ENCODE measurements at regions of chr15 and their contacts with region 1.

Region 1: DNA sequence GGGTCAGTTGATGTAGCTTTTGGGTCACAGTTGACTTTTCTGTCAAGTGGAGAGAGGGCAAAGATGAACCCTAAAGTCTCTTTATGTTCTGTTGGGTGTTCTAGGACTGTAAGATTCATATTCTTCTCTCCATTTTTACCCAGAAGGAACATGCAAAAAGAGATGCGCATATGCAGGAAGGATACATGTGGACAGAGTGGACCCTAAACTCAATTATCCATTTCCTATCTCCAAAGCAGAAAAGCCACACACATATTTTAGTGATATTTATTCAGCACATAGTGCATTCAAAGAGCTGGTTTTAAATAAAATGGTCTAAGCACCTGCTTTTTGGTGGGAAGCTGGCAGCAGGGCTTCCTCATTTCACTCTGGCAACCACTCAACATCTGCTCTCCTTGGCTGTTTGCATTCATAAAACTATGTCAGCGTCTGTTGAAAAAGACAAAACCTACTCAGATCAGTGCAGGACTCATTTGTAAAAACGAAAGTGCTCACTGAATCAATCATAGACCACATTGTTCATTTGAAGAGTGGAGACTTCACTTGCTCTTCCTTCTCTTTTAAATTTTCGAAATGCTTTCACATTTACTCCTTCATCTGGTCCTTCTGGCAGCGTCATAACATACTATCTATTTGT is 96.6 kb downstream of the SEMA6D start:
- DNase-seq: no peak
- H3K4me3 Mint-ChIP-seq: no peak overlapping the region
- H3K27ac Mint-ChIP-seq: peak overlapping the region; percentile 11
- H3K4me1 Mint-ChIP-seq: peaks cover 13% of the 10 kb centered on the region
- H3K27me3 Mint-ChIP-seq: peaks cover 7% of the 10 kb centered on the region

Region 2: DNA sequence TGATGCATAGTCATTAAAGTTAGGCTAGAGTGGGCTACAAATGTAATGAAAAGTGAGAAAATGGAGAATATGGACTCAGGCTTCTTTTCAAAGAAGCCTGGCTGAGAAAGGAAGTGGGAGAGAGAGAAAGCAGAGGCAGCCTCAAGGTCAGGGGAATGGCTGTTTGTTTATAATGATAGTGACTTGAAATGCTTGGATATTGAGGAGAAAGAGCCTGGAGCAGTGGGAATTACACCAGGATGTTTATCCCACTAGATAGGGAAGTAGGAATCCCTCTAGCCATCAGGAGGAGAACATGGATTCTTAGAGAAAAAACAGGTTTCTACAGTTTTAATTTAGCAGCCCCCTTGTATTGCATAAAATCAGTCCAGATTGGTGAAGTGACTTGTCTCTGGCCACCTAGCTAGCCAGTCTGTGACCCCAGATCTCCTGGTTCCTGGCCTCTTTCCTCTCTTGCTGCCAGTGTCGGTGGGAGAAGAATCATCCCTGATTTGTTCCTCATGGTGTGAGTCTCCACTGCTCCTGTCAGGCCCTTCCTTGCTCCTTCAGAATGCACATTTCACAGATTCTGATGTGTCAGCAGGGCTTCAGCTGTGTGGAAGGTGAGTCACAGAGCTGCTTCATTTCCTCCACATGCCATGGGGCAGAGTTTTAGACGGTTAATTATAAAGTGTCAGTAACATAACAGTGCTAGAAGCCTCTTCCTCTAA is 63.7 kb before region 1 on chr15:
- intact Hi-C with region 1: no loop called
- DNase-seq: no peak
- H3K4me3 Mint-ChIP-seq: no peak overlapping the region
- H3K27ac Mint-ChIP-seq: no peak overlapping the region
- H3K4me1 Mint-ChIP-seq: no peaks in the 10 kb centered on the region
- H3K27me3 Mint-ChIP-seq: no peaks in the 10 kb centered on the region

Region 3: GRCh38 chr15:47870956-47871625 is 57.2 kb after region 1 on chr15:
- intact Hi-C with region 1: no loop called
- DNase-seq: no peak
- H3K4me3 Mint-ChIP-seq: no peak overlapping the region
- H3K27ac Mint-ChIP-seq: no peak overlapping the region
- H3K4me1 Mint-ChIP-seq: no peaks in the 10 kb centered on the region
- H3K27me3 Mint-ChIP-seq: no peaks in the 10 kb centered on the region

Region 4: DNA sequence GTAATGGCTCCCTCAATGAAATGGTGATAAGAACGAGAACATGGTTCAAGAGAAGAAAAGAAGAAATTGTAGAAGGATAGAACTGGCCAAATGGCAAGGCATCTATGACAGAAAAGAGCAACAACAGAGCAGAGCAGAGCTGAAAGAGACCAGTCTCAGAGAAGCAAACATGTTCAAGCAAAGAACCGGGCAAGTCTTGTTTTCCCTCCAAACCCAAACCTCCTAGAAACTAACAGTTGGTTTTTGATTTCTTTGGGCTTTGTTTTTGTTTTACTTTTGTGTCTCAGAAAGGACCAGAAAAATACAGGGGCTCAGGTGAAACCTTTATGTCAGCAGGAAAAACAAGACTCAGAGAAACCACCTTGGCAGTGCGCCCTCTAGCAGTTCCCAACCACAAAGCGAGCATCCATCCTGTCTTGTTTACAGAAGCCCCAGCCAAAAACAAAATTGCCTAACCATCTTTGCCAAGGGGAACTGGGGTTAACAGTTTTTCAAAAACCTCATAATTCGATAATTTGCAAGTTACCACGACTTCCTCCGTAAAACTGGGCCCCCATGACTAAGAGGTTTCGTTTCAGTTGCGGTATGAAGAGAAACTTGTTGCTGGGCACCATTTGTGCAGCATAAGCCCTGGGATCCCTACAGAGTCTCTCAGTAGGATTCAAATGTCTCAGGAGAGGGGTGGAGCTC is 147.7 kb after region 1 on chr15:
- intact Hi-C with region 1: loop called (anchors 1 kb)
- DNase-seq: peak; percentile 28
- H3K4me3 Mint-ChIP-seq: peak overlapping the region; percentile 34
- H3K27ac Mint-ChIP-seq: peak overlapping the region; percentile 71
- H3K4me1 Mint-ChIP-seq: peaks cover 34% of the 10 kb centered on the region
- H3K27me3 Mint-ChIP-seq: peaks cover 3% of the 10 kb centered on the region

Measured in activated T-helper 1 cell treated with anti-CD3 and anti-CD28 coated beads, Interleukin-12 subunit alpha, Interleukin-12 subunit beta, Interleukin-2, Interleukin-4 antibody, amounts not matched to agents 30 ng/mL and 10 ng/mL and 1 ng/mL, durations not matched to agents 14 hours and 24 hours and 36 hours (primary cell).